BJ (cell line): ENCODE measurements at regions of chr12 and their contacts with region 1.

Region 1: DNA sequence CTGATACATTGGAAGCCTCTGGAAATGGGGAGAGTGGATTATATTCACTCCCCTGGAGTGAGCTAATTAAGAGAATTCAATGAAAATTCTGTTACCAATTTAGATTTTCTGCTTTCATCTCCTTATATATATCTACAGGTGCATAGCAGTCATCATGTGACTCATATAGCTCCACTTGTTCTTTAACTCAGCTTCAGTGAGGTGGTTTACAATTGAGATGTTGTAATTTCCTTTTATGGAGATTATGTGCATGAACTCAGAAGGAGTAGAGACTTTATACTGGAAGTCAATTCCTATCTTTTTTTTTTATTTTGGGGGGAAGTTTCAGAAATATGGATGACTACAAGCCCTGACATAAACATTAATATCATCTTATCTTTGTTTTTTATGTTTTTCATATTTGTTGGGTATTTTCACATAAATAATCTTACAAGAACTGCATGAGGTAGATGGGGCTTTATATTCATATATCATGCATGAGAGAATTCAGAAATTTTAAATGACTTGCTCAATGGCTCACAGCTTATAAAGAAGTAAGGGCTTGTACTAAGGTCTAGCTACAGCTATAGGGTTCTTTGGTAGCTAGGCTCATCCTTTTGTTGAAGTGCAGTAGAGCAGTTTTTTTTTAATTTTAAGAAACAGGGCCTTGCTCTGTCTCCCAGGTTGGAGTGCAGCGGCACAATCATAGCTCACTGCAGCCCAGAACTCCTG is 92.3 kb upstream of the SCAF11 start:
- DNase-seq: no peak
- H3K4me3 ChIP-seq: no peak overlapping the region
- H3K27me3 ChIP-seq: peaks cover 4% of the 10 kb centered on the region
- CTCF ChIP-seq: no peak

Region 2: GRCh38 chr12:46005151-46005797 is 77.4 kb before region 1 on chr12:
- CTCF ChIA-PET with region 1: no interaction called
- POLR2A ChIA-PET with region 1: no interaction called
- DNase-seq: no peak
- H3K4me3 ChIP-seq: no peak overlapping the region
- H3K27me3 ChIP-seq: peaks cover 1% of the 10 kb centered on the region; the same call in 1 of the 2 replicates
- CTCF ChIP-seq: peak; percentile 36; the same call in 1 of the 2 replicates

Region 3: GRCh38 chr12:46071769-46072624 is 10.6 kb before region 1 on chr12:
- CTCF ChIA-PET with region 1: interaction called, 15 read pairs
- POLR2A ChIA-PET with region 1: no interaction called
- DNase-seq: peak; percentile 5
- H3K4me3 ChIP-seq: no peak overlapping the region
- H3K27me3 ChIP-seq: no peaks in the 10 kb centered on the region
- CTCF ChIP-seq: peak; percentile 98

Region 4: DNA sequence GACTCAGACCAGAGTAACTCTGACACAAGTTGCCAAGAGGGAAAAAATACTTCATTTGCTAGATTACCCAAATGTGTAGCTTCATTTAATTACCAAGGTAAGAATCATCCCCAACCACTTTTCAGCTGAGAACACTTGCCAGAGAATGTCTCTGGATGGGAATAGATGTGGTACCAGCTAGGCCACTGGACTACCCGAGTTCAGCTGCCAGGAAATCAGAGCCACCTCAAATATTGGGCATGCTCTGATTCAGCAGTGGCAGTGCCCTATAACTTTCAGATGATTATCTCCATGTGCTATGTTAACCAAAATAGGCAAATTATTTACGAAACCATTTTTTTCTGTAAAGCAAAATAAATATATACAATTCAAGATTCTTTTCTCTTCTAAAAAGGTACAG is 105.5 kb after region 1 on chr12:
- CTCF ChIA-PET with region 1: no interaction called
- POLR2A ChIA-PET with region 1: no interaction called
- DNase-seq: no peak
- H3K4me3 ChIP-seq: no peak overlapping the region
- H3K27me3 ChIP-seq: no peaks in the 10 kb centered on the region
- CTCF ChIP-seq: no peak

Region 5: DNA sequence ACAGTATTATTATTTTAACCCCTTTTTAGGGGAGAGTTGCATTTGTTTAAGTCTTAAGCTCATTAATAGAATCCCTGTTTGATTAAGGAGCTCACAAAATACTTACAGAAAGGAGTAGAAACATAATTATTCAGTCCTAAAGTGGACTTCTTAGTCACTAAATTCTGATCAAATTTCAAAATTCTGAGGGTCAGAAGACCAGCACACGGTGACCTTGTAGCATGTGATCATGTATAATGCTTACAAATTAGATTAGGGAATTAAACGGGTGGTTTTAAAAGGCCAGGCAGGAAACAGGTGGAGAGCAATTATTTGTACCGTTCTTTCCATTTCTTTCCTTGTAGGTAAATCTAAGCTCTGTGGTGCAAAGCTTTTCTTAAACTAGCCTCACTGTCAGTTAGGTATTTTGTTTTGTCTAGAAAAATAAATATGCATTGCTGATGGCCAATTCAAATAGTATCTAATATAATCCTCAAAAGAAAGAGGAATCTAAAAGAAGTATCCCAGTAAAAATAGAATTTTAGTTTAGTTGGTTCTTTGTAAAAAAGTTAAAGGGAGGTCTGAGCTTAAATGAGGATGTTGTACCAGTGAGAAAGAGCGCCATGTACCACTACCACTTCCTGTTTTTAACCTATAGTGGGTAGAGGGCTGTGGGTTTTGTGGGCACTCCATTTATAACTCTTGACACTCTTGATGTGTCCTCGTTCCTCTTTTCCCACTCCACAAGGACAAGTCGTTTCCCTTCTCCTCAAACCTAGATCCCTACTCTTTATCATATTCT is 135.1 kb after region 1 on chr12:
- CTCF ChIA-PET with region 1: no interaction called
- POLR2A ChIA-PET with region 1: no interaction called
- DNase-seq: no peak
- H3K4me3 ChIP-seq: no peak overlapping the region
- H3K27me3 ChIP-seq: no peaks in the 10 kb centered on the region
- CTCF ChIP-seq: no peak